ENCODE measurements at regions of chr11 and their contacts with region 1.

Region 1: GRCh38 chr11:6505577-6506240 is 8.6 kb downstream of the DNHD1 start:
- DNase-seq: no peak
- ATAC-seq: peak; percentile 84 to 86 (median 84)
- H3K4me3 ChIP-seq: no peak overlapping the region
- H3K27ac ChIP-seq: no peak overlapping the region
- H3K4me1 ChIP-seq: peaks cover 0 to 11% (median 0%) of the 10 kb centered on the region in 4 donors
- H3K27me3 ChIP-seq: no peaks in the 10 kb centered on the region
- CTCF ChIP-seq: peak; percentile 77 to 87 (median 82)
- POLR2A ChIP-seq: no peak

Region 2: GRCh38 chr11:6377902-6378639 is 127.6 kb before region 1 on chr11:
- intact Hi-C with region 1: loop called (anchors 5 to 10 kb)
- DNase-seq: no peak
- ATAC-seq: peak; percentile 45 to 68 (median 54)
- H3K4me3 ChIP-seq: no peak overlapping the region
- H3K27ac ChIP-seq: no peak overlapping the region
- H3K4me1 ChIP-seq: no peaks in the 10 kb centered on the region
- H3K27me3 ChIP-seq: no peaks in the 10 kb centered on the region
- CTCF ChIP-seq: no peak
- POLR2A ChIP-seq: no peak

Region 3: DNA sequence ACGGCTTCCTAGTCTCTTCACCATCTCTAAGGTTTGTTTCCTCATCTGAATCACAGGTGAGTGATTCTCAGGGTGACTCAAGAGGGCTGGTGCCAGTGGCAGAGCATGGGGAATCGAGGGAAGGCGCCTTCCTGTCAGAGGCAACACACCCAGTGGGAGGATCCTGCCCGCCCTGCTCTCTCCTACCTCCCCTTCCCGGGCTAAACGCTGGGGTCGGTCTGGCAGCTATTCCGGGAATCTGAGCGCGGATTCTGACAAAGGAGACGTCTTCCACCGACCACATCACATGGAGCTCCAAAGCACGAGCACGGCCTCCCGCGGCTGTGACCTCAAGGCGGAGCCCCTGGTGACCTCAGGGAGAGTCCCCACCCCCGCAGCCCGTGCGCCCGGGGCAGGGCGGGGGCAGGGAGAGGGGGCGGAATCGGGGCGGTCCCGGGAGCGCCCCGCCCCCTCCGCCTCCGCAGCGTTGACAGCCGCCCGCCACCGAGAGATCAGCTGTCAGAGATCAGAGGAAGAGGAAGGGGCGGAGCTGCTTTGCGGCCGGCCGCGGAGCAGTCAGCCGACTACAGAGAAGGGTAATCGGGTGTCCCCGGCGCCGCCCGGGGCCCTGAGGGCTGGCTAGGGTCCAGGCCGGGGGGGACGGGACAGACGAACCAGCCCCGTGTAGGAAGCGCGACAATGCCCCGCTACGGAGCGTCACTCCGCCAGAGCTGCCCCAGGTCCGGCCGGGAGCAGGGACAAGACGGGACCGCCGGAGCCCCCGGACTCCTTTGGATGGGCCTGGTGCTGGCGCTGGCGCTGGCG is 115.6 kb before region 1 on chr11 and contains the start of gene SMPD1:
- intact Hi-C with region 1: loop called in 1 of 2 experiments (anchors 10 kb)
- DNase-seq: peak; percentile 96 to 97 (median 96)
- ATAC-seq: peak; percentile 94 to 98 (median 95)
- H3K4me3 ChIP-seq: peak within 1 kb of the TSS; percentile 79 to 96 (median 95)
- H3K27ac ChIP-seq: peak within 1 kb of the TSS; percentile 81 to 87 (median 85)
- H3K4me1 ChIP-seq: peaks cover 0 to 31% (median 12%) of the 10 kb centered on the region in 4 donors
- H3K27me3 ChIP-seq: no peaks in the 10 kb centered on the region
- CTCF ChIP-seq: no peak
- POLR2A ChIP-seq: peak; percentile 86
- total RNA-seq, gene SMPD1: 45.3 to 77.9 (median 57.3) TPM